B cell (primary cell): ENCODE measurements at regions of chr3 and their contacts with region 1.

Region 1: GRCh38 chr3:12484198-12484974 is at the start of gene TSEN2:
- DNase-seq: peak; percentile 98
- ATAC-seq: peak; percentile 94
- H3K4me3 ChIP-seq: peak within 1 kb of the TSS; percentile 75 to 88 (median 82)
- H3K4me3 Mint-ChIP-seq: peak within 1 kb of the TSS; percentile 96
- H3K27ac ChIP-seq: peak within 1 kb of the TSS; percentile 60 to 71
- H3K27ac Mint-ChIP-seq: peak within 1 kb of the TSS; percentile 90
- H3K4me1 ChIP-seq: peaks cover 14 to 29% of the 10 kb centered on the region in 2 donors
- H3K4me1 Mint-ChIP-seq: peaks cover 29% of the 10 kb centered on the region
- H3K27me3 ChIP-seq: no peaks in the 10 kb centered on the region
- H3K27me3 Mint-ChIP-seq: no peaks in the 10 kb centered on the region
- CTCF ChIP-seq: no peak
- total RNA-seq, gene TSEN2: 17.6 and 17.9 TPM in 2 replicates

Region 2: DNA sequence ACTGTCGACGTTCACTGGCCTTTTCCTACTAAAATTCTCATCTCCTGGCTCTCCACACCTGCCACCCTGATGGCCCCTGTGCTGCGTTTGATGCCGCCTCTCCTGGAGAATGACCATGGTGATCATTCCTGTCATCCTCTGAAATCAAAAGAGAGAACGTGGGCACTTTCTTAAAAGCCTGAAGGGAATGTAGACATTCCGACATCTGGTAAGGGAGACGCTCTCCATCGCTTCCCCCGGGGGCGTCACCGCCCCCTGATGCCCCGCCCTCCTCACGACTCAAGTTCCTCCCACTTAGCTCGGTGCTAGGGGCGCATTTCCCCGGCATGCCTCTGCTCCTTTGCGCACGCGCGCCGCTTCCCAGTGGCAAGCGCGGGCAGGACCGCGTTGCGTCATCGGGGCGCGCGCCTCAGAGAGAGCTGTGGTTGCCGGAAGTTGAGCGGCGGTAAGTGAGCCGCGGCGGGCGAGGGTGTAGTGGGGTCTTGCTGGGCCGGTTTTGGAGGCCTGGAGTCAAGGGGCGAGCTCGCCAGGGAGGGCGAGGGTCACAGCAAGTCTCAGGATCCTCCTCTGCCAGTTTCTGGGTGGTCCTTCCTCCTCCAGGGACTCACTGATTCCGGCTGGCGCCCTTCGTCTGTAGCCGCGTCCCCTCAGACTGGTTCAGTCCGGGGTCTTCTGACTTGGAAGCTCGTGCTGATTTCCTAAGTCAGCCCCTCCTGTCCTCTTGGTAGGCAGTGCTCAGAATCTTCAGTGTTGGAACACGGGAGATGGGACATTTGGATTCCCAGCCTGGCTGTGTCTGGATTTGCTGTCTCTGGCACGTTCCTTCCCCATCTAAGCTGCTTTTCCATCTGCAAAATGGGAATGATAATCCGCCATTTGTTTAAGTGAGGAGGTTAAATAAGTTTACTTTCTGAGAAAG is 1212.1 kb before region 1 on chr3 and contains the start of gene ATG7:
- CTCF ChIA-PET with region 1: no interaction called
- POLR2A ChIA-PET with region 1: no interaction called
- intact Hi-C with region 1: loop called (anchors 2 kb)
- DNase-seq: peak; percentile 98
- ATAC-seq: peak; percentile 98
- H3K4me3 ChIP-seq: peak within 1 kb of the TSS; percentile 94 to 100 (median 99)
- H3K4me3 Mint-ChIP-seq: peak within 1 kb of the TSS; percentile 97
- H3K27ac ChIP-seq: peak within 1 kb of the TSS; percentile 91 to 95
- H3K27ac Mint-ChIP-seq: peak within 1 kb of the TSS; percentile 98
- H3K4me1 ChIP-seq: peaks cover 17 to 20% of the 10 kb centered on the region in 2 donors
- H3K4me1 Mint-ChIP-seq: peaks cover 47% of the 10 kb centered on the region
- H3K27me3 ChIP-seq: no peaks in the 10 kb centered on the region
- H3K27me3 Mint-ChIP-seq: peaks cover 2% of the 10 kb centered on the region
- CTCF ChIP-seq: no peak
- total RNA-seq, gene ATG7: 66.4 and 72.7 TPM in 2 replicates

Region 3: GRCh38 chr3:11846281-11847034 is 637.9 kb before region 1 on chr3 and contains the start of gene TAMM41:
- CTCF ChIA-PET with region 1: interaction called, 4 read pairs
- POLR2A ChIA-PET with region 1: interaction called, 3 read pairs
- intact Hi-C with region 1: loop called (anchors 1 kb)
- DNase-seq: peak; percentile 90
- ATAC-seq: peak; percentile 100
- H3K4me3 ChIP-seq: peak within 1 kb of the TSS; percentile 56 to 96 (median 82)
- H3K4me3 Mint-ChIP-seq: peak within 1 kb of the TSS; percentile 99
- H3K27ac ChIP-seq: peak within 1 kb of the TSS; percentile 77 to 82
- H3K27ac Mint-ChIP-seq: peak within 1 kb of the TSS; percentile 96
- H3K4me1 ChIP-seq: peaks cover 22 to 27% of the 10 kb centered on the region in 2 donors
- H3K4me1 Mint-ChIP-seq: peaks cover 39% of the 10 kb centered on the region
- H3K27me3 ChIP-seq: no peaks in the 10 kb centered on the region
- H3K27me3 Mint-ChIP-seq: no peaks in the 10 kb centered on the region
- CTCF ChIP-seq: peak; percentile 74
- total RNA-seq, gene TAMM41: 52.3 and 54.2 TPM in 2 replicates

Region 4: DNA sequence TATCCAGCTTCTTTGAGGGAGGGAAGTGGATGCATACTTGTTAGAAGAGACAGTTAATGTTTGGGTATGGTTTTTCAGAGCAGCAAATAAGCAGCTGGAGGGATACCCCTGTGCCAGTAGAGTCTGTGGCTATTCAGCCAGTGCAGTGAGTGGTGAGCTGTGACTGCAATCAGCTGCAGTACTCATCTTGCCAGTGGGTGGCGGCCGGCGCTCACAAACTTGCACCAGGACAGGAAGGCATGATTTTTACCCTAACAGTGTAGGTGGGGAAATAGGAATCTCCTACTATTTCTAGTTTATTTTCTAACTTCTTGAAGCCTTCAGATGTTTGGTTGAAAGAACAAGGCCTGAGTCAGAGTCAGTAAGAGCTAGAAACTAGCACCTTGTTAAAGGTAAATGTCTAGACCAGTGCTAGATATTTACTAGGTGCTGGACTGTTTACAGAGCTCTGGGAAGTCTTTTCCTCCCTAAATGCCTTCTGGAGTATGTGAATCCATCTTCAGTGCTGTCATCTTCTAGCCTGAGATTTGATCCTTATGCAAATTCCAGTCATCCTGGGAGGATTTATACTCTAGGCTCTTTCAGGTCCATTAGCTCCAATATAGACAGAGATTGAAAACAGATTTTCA is 349.2 kb before region 1 on chr3:
- CTCF ChIA-PET with region 1: interaction called, 200 read pairs
- POLR2A ChIA-PET with region 1: no interaction called
- intact Hi-C with region 1: loop called (anchors 1 kb)
- DNase-seq: peak; percentile 63
- ATAC-seq: peak; percentile 60
- H3K4me3 ChIP-seq: no peak overlapping the region
- H3K4me3 Mint-ChIP-seq: no peak overlapping the region
- H3K27ac ChIP-seq: no peak overlapping the region
- H3K27ac Mint-ChIP-seq: no peak overlapping the region
- H3K4me1 ChIP-seq: no peaks in the 10 kb centered on the region
- H3K4me1 Mint-ChIP-seq: no peaks in the 10 kb centered on the region
- H3K27me3 ChIP-seq: no peaks in the 10 kb centered on the region
- H3K27me3 Mint-ChIP-seq: peaks cover 20% of the 10 kb centered on the region
- CTCF ChIP-seq: peak; percentile 85

Region 5: GRCh38 chr3:12316776-12317243 is 167.6 kb before region 1 on chr3:
- CTCF ChIA-PET with region 1: no interaction called
- POLR2A ChIA-PET with region 1: no interaction called
- intact Hi-C with region 1: no loop called
- DNase-seq: no peak
- ATAC-seq: no peak
- H3K4me3 ChIP-seq: no peak overlapping the region
- H3K4me3 Mint-ChIP-seq: no peak overlapping the region
- H3K27ac ChIP-seq: no peak overlapping the region
- H3K27ac Mint-ChIP-seq: no peak overlapping the region
- H3K4me1 ChIP-seq: no peaks in the 10 kb centered on the region
- H3K4me1 Mint-ChIP-seq: no peaks in the 10 kb centered on the region
- H3K27me3 ChIP-seq: no peaks in the 10 kb centered on the region
- H3K27me3 Mint-ChIP-seq: peaks cover 10% of the 10 kb centered on the region
- CTCF ChIP-seq: no peak

Region 6: GRCh38 chr3:12471243-12471651 is 13.1 kb before region 1 on chr3:
- CTCF ChIA-PET with region 1: interaction called, 17 read pairs
- POLR2A ChIA-PET with region 1: no interaction called
- intact Hi-C with region 1: no loop called
- DNase-seq: no peak
- ATAC-seq: no peak
- H3K4me3 ChIP-seq: no peak overlapping the region
- H3K4me3 Mint-ChIP-seq: peak overlapping the region; percentile 26
- H3K27ac ChIP-seq: no peak overlapping the region
- H3K27ac Mint-ChIP-seq: no peak overlapping the region
- H3K4me1 ChIP-seq: no peaks in the 10 kb centered on the region
- H3K4me1 Mint-ChIP-seq: peaks cover 6% of the 10 kb centered on the region
- H3K27me3 ChIP-seq: no peaks in the 10 kb centered on the region
- H3K27me3 Mint-ChIP-seq: no peaks in the 10 kb centered on the region
- CTCF ChIP-seq: no peak

Region 7: DNA sequence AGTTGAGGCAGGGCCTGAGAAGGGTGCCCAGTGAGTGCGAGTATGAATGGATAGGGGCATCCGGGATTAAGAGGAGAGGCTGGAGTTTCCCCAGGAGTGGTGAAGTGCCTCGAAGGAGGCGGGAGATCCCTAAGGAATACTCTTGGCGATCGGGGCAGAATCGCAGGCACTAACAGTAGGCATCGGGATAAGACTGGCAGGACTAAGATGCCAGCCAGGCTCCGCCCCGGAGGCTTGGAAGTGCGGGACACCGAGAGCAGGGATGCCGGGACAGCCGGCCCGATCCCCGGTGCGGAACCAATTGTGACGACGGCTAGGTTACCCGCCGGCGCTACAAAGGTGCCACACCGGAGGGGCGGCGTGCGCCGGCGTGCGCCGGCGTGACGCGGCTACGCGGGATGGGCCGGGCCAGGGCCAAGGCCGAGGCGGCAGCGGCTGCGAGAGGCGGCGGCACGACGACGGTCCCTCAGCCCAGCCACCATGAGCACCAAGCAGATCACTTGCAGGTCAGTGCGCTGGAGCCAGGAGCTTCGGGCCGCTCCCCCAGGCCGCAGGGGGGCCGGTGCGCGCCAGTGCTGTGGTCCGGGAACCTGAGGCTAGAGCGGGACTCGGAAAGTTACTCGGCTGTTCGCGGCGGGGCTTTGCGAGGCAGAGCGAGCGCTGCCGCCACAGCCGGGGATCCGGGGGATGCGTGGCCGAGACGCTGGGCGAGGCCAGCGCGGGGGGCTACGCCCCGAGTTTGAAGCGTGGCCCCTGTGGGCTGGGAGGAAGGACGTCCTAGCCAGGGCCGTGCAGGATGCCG is 72.5 kb after region 1 on chr3 and contains the start of gene MKRN2:
- CTCF ChIA-PET with region 1: interaction called, 3 read pairs
- POLR2A ChIA-PET with region 1: no interaction called
- intact Hi-C with region 1: loop called (anchors 1 kb)
- DNase-seq: peak; percentile 91
- ATAC-seq: peak; percentile 96
- H3K4me3 ChIP-seq: peak within 1 kb of the TSS; percentile 85 to 91 (median 90)
- H3K4me3 Mint-ChIP-seq: peak within 1 kb of the TSS; percentile 91
- H3K27ac ChIP-seq: peak within 1 kb of the TSS; percentile 91 to 92
- H3K27ac Mint-ChIP-seq: peak within 1 kb of the TSS; percentile 84
- H3K4me1 ChIP-seq: peaks cover 40 to 41% of the 10 kb centered on the region in 2 donors
- H3K4me1 Mint-ChIP-seq: peaks cover 60% of the 10 kb centered on the region
- H3K27me3 ChIP-seq: peaks cover 0 to 17% (median 5%) of the 10 kb centered on the region in 4 experiments
- H3K27me3 Mint-ChIP-seq: peaks cover 23% of the 10 kb centered on the region
- CTCF ChIP-seq: no peak
- total RNA-seq, gene MKRN2: 25.9 and 29.3 TPM in 2 replicates

Region 8: DNA sequence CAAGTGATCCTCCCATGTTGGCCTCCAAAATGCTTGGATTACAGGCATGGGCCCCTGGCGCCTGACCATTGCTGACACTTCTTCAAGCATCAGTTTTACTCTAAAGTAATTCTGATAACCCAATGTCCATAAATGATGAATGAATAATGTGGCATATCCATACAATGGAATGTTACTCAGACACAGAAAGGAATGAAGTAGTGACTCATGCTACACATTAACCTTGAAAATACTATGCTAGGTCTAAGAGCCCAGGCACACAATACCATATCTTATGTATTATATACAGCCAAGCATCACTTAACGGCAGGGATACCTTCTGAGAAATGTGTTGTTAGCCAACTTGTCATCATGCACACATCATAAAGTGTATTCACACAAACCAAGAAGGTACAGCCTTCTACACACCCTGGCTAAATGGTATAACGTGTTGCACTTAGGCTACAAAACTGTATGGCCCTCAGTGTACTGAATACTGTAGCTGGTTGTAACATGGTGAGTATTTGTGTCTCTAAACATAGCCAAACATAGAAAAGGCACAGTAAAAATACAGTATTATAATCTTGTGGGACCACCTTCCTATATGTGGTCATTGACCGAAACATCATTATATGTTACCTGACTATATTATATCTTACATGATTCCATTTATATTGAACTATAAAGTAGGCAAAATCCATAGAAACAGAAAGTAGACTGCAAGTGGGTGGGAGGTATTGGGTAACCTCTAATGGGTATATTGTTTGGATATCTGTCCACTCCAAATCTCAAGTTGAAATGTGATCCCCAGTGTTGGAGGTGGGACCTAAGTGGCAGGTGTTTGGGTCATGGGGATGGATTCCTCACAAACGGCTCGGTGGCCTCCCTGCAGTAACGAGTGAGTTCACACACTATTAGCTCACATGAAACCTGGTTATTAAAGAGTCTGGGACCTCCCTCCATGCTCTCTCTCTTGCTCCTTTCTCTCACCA is 103.9 kb after region 1 on chr3:
- CTCF ChIA-PET with region 1: no interaction called
- POLR2A ChIA-PET with region 1: no interaction called
- intact Hi-C with region 1: no loop called
- DNase-seq: no peak
- ATAC-seq: no peak
- H3K4me3 ChIP-seq: no peak overlapping the region
- H3K4me3 Mint-ChIP-seq: no peak overlapping the region
- H3K27ac ChIP-seq: peak overlapping the region in 1 of 2 donors; percentile 22
- H3K27ac Mint-ChIP-seq: no peak overlapping the region
- H3K4me1 ChIP-seq: peaks cover 12 to 15% of the 10 kb centered on the region in 2 donors
- H3K4me1 Mint-ChIP-seq: peaks cover 26% of the 10 kb centered on the region
- H3K27me3 ChIP-seq: no peaks in the 10 kb centered on the region
- H3K27me3 Mint-ChIP-seq: no peaks in the 10 kb centered on the region
- CTCF ChIP-seq: no peak

Region 9: GRCh38 chr3:12884186-12884680 is 399.8 kb after region 1 on chr3:
- CTCF ChIA-PET with region 1: no interaction called
- POLR2A ChIA-PET with region 1: no interaction called
- intact Hi-C with region 1: loop called (anchors 5 kb)
- DNase-seq: no peak
- ATAC-seq: no peak
- H3K4me3 ChIP-seq: no peak overlapping the region
- H3K4me3 Mint-ChIP-seq: peak overlapping the region; percentile 44
- H3K27ac ChIP-seq: no peak overlapping the region
- H3K27ac Mint-ChIP-seq: no peak overlapping the region
- H3K4me1 ChIP-seq: peaks cover 33 to 45% of the 10 kb centered on the region in 2 donors
- H3K4me1 Mint-ChIP-seq: peaks cover 42% of the 10 kb centered on the region
- H3K27me3 ChIP-seq: no peaks in the 10 kb centered on the region
- H3K27me3 Mint-ChIP-seq: peaks cover 5% of the 10 kb centered on the region
- CTCF ChIP-seq: no peak